ENCODE measurements at regions of chr3 and their contacts with region 1.

Region 1: GRCh38 chr3:138594150-138594934 is at the start of gene CEP70:
- DNase-seq: peak; percentile 95
- ATAC-seq: peak; percentile 99
- H3K4me3 ChIP-seq: peak within 1 kb of the TSS; percentile 54
- H3K27ac ChIP-seq: peak within 1 kb of the TSS; percentile 58
- H3K4me1 ChIP-seq: no peaks in the 10 kb centered on the region
- H3K27me3 ChIP-seq: no peaks in the 10 kb centered on the region
- CTCF ChIP-seq: peak; percentile 89
- POLR2A ChIP-seq: peak; percentile 76
- RAD21 ChIP-seq: peak; percentile 83
- total RNA-seq, gene CEP70: 11.1 and 21.4 TPM in 2 replicates

Region 2: GRCh38 chr3:138417559-138417982 is 176.8 kb before region 1 on chr3:
- CTCF ChIA-PET with region 1: no interaction called
- POLR2A ChIA-PET with region 1: no interaction called
- dilution Hi-C with region 1: no loop called
- in situ Hi-C with region 1: no loop called
- intact Hi-C with region 1: loop called (anchors 5 kb)
- DNase-seq: peak; percentile 80
- ATAC-seq: peak; percentile 93
- H3K4me3 ChIP-seq: no peak overlapping the region
- H3K27ac ChIP-seq: no peak overlapping the region
- H3K4me1 ChIP-seq: peaks cover 8% of the 10 kb centered on the region
- H3K27me3 ChIP-seq: peaks cover 4% of the 10 kb centered on the region; the same call in 1 of the 2 replicates
- CTCF ChIP-seq: peak; percentile 92
- POLR2A ChIP-seq: no peak
- RAD21 ChIP-seq: peak; percentile 84

Region 3: GRCh38 chr3:138479438-138479863 is 114.9 kb before region 1 on chr3:
- CTCF ChIA-PET with region 1: interaction called, 4 read pairs
- POLR2A ChIA-PET with region 1: no interaction called
- dilution Hi-C with region 1: no loop called
- in situ Hi-C with region 1: no loop called
- intact Hi-C with region 1: loop called (anchors 1 kb)
- DNase-seq: peak; percentile 46
- ATAC-seq: peak; percentile 79
- H3K4me3 ChIP-seq: no peak overlapping the region
- H3K27ac ChIP-seq: no peak overlapping the region
- H3K4me1 ChIP-seq: no peaks in the 10 kb centered on the region
- H3K27me3 ChIP-seq: no peaks in the 10 kb centered on the region
- CTCF ChIP-seq: peak; percentile 70
- POLR2A ChIP-seq: no peak
- RAD21 ChIP-seq: peak; percentile 72

Region 4: GRCh38 chr3:138578141-138578540 is 16.2 kb before region 1 on chr3:
- CTCF ChIA-PET with region 1: no interaction called
- POLR2A ChIA-PET with region 1: no interaction called
- dilution Hi-C with region 1: no loop called
- in situ Hi-C with region 1: no loop called
- intact Hi-C with region 1: no loop called
- DNase-seq: no peak
- ATAC-seq: no peak
- H3K4me3 ChIP-seq: no peak overlapping the region
- H3K27ac ChIP-seq: no peak overlapping the region
- H3K4me1 ChIP-seq: no peaks in the 10 kb centered on the region
- H3K27me3 ChIP-seq: no peaks in the 10 kb centered on the region
- CTCF ChIP-seq: no peak
- POLR2A ChIP-seq: no peak
- RAD21 ChIP-seq: no peak

Region 5: GRCh38 chr3:138694287-138695007 is 100.1 kb after region 1 on chr3:
- CTCF ChIA-PET with region 1: interaction called, 8 read pairs
- POLR2A ChIA-PET with region 1: interaction called, 3 read pairs
- dilution Hi-C with region 1: no loop called
- in situ Hi-C with region 1: no loop called
- intact Hi-C with region 1: loop called (anchors 1 kb)
- DNase-seq: peak; percentile 99
- ATAC-seq: peak; percentile 96
- H3K4me3 ChIP-seq: no peak overlapping the region
- H3K27ac ChIP-seq: peak overlapping the region; percentile 61
- H3K4me1 ChIP-seq: peaks cover 4% of the 10 kb centered on the region
- H3K27me3 ChIP-seq: no peaks in the 10 kb centered on the region
- CTCF ChIP-seq: no peak
- POLR2A ChIP-seq: no peak
- RAD21 ChIP-seq: no peak

Region 6: GRCh38 chr3:138786788-138787278 is 192.5 kb after region 1 on chr3:
- CTCF ChIA-PET with region 1: no interaction called
- POLR2A ChIA-PET with region 1: no interaction called
- dilution Hi-C with region 1: no loop called
- in situ Hi-C with region 1: no loop called
- intact Hi-C with region 1: no loop called
- DNase-seq: peak; percentile 50
- ATAC-seq: peak; percentile 66
- H3K4me3 ChIP-seq: no peak overlapping the region
- H3K27ac ChIP-seq: no peak overlapping the region
- H3K4me1 ChIP-seq: peaks cover 3% of the 10 kb centered on the region
- H3K27me3 ChIP-seq: no peaks in the 10 kb centered on the region
- CTCF ChIP-seq: no peak
- POLR2A ChIP-seq: no peak
- RAD21 ChIP-seq: no peak

Region 7: DNA sequence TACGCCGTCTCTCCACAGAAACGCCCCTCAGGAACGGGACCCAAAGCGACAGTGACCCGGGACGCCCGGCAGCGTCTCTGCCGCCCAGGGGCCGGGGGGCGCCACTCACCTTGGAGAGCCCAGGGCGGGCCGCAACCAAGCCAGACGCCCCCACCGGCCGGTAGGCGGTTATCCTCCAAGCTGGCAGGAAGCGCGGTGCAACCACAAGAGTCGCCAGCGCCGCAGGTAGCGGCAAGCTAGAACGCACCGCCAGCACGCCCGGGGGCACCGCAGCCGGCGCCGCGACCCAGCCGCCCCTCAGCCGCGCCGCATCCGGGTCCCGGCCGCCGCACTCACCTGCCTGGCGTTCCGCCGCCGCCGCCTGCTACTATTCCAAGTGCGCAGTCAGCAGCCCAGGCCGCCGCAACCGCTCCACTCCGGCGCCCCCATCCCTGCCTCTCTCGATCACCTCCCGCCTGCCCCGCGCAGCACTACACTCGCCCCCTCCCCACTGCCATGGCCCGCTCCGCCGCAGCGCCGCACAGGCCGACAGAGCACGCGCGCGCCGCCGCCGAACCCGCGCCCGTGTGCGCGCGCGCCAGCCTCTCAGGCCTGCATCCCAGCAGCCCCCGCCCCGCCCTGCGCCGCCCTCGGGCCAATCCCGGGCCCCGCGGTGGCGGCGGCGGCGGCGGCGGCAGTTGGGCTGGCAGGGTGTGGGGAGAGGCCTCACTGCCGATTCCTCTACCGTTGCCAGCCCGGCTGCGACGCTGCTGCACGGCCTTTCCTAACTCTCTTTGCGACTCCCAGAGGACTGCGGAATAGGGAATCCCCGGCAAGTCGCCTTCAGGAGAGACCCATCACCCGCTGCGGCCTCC is 240.2 kb after region 1 on chr3 and contains the start of gene PIK3CB:
- CTCF ChIA-PET with region 1: no interaction called
- POLR2A ChIA-PET with region 1: no interaction called
- dilution Hi-C with region 1: no loop called
- in situ Hi-C with region 1: no loop called
- intact Hi-C with region 1: loop called (anchors 10 kb)
- DNase-seq: peak; percentile 62
- ATAC-seq: peak; percentile 97
- H3K4me3 ChIP-seq: peak within 1 kb of the TSS; percentile 85
- H3K27ac ChIP-seq: peak within 1 kb of the TSS; percentile 83
- H3K4me1 ChIP-seq: peaks cover 1% of the 10 kb centered on the region; the same call in 1 of the 2 replicates
- H3K27me3 ChIP-seq: no peaks in the 10 kb centered on the region
- CTCF ChIP-seq: peak; percentile 15; the same call in 1 of the 2 replicates
- POLR2A ChIP-seq: peak; percentile 70
- RAD21 ChIP-seq: no peak
- total RNA-seq, gene PIK3CB: 6.3 and 7.5 TPM in 2 replicates

Region 8: GRCh38 chr3:138923531-138923994 is 329.2 kb after region 1 on chr3:
- CTCF ChIA-PET with region 1: interaction called, 18 read pairs
- POLR2A ChIA-PET with region 1: no interaction called
- dilution Hi-C with region 1: no loop called
- in situ Hi-C with region 1: loop called (anchors 5 kb)
- intact Hi-C with region 1: loop called (anchors 1 kb)
- DNase-seq: peak; percentile 83
- ATAC-seq: peak; percentile 77
- H3K4me3 ChIP-seq: no peak overlapping the region
- H3K27ac ChIP-seq: no peak overlapping the region
- H3K4me1 ChIP-seq: peaks cover 9% of the 10 kb centered on the region
- H3K27me3 ChIP-seq: peaks cover 5% of the 10 kb centered on the region; the same call in 1 of the 2 replicates
- CTCF ChIP-seq: peak; percentile 89
- POLR2A ChIP-seq: no peak
- RAD21 ChIP-seq: peak; percentile 80

Region 9: GRCh38 chr3:139329345-139329850 is 735.1 kb after region 1 on chr3:
- CTCF ChIA-PET with region 1: no interaction called
- POLR2A ChIA-PET with region 1: no interaction called
- dilution Hi-C with region 1: no loop called
- in situ Hi-C with region 1: loop called (anchors 25 kb)
- intact Hi-C with region 1: loop called (anchors 5 kb)
- DNase-seq: peak; percentile 63
- ATAC-seq: peak; percentile 99
- H3K4me3 ChIP-seq: no peak overlapping the region
- H3K27ac ChIP-seq: no peak overlapping the region
- H3K4me1 ChIP-seq: peaks cover 2% of the 10 kb centered on the region; the same call in 1 of the 2 replicates
- H3K27me3 ChIP-seq: peaks cover 18% of the 10 kb centered on the region
- CTCF ChIP-seq: peak; percentile 100
- POLR2A ChIP-seq: peak; percentile 62; the same call in 1 of the 2 replicates
- RAD21 ChIP-seq: peak; percentile 100

Measured in IMR-90 (cell line).